Colonic mucosa (tissue), 4 donors: ENCODE measurements at regions of chr9 and their contacts with region 1.

Region 1: GRCh38 chr9:69054989-69055388 is 19.4 kb downstream of the FXN start:
- DNase-seq: no peak
- H3K4me3 ChIP-seq: no peak overlapping the region
- H3K27ac ChIP-seq: no peak overlapping the region
- H3K4me1 ChIP-seq: no peaks in the 10 kb centered on the region
- H3K27me3 ChIP-seq: no peaks in the 10 kb centered on the region
- CTCF ChIP-seq: no peak

Region 2: DNA sequence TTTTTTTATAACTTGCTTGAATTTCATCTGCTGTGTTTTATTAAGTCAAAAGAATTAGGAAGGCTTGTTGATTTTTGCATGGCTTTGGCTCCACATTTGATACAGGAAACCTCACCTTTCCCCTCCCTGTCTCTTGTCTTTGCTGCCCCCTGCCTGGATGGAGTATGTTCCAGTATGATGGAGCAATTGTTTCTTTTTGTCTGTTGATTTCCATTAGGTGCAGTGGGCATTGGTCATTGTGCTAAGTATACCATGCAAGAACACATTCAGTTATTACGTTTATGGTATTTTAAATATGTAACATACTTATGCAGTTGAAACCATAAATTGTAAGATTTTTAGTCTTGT is 138.7 kb after region 1 on chr9:
- intact Hi-C with region 1: loop called (anchors 2 kb)
- DNase-seq: no peak
- H3K4me3 ChIP-seq: no peak overlapping the region
- H3K27ac ChIP-seq: no peak overlapping the region
- H3K4me1 ChIP-seq: no peaks in the 10 kb centered on the region
- H3K27me3 ChIP-seq: no peaks in the 10 kb centered on the region
- CTCF ChIP-seq: no peak

Region 3: DNA sequence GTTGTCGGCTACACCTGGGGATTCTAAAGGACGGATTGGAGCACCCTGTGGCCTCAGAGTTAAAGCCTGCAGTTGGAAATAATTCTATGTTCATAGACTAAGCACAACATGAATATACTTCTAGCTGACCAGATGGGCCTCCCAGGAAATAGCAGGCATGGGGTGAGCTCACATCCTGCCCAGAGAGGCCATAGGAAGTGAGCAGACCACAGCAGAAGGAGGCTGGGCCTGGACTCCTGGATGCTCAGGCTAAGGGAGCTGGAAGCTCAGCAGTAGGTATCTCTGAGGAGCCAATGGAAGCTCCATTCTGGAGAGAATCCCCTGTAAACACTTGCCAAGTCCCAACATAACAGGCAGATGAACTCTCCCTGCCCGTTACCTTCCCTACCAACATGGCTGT is 292.0 kb after region 1 on chr9:
- intact Hi-C with region 1: no loop called
- DNase-seq: no peak
- H3K4me3 ChIP-seq: no peak overlapping the region
- H3K27ac ChIP-seq: no peak overlapping the region
- H3K4me1 ChIP-seq: no peaks in the 10 kb centered on the region
- H3K27me3 ChIP-seq: no peaks in the 10 kb centered on the region
- CTCF ChIP-seq: no peak